Activated T-helper 2 cell treated with anti-CD3 and anti-CD28 coated beads, Interferon-gamma antibody, Interleukin-2, Interleukin-4, amounts not matched to agents 10 μg/mL and 5 μg/mL and 100 μg/mL, durations not matched to agents 14 hours and 24 hours and 36 hours (primary cell): ENCODE measurements at regions of chr10 and their contacts with region 1.

Region 1: DNA sequence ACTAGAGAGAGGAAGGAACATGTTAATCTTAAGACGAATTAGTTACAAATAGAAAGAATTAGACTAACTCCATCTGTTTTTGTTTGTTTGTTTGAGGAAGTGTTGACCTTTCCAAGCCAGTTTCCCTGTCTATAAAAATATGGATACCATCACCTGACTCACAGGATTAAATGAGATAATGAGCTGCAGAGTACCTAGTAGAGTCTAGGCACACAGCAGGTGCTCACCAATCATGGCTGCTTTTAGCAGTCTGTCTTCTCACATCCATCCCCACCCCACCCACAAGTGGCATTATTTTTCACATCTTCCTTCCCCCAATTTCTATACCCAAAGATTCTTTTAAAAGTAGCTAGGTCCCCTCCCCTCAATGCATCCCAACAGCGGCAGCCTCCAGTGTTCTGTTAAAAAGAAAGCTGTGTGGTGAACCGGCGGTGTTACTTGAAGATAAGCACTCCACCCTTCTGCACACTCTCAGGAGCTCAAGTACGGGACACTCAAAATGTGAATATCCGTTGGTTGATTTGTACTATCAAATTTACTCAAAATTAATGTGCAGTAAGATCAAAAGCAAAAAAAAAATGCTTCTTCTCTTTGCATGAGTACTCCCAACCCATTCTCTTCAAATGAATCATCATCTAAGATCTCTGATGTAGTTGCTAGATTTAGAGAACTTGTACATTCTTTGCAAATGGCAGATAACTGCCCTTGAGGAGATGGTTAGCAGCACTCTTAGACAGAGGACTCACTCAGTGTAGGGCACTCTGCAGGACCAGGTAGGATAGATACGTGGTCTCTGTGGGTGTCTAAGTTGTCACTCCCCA is 145.4 kb upstream of the ASAH2 start:
- DNase-seq: peak; percentile 44
- H3K4me3 Mint-ChIP-seq: peak overlapping the region; percentile 68
- H3K27ac Mint-ChIP-seq: peak overlapping the region; percentile 92
- H3K4me1 Mint-ChIP-seq: peaks cover 59% of the 10 kb centered on the region
- H3K27me3 Mint-ChIP-seq: no peaks in the 10 kb centered on the region

Region 2: DNA sequence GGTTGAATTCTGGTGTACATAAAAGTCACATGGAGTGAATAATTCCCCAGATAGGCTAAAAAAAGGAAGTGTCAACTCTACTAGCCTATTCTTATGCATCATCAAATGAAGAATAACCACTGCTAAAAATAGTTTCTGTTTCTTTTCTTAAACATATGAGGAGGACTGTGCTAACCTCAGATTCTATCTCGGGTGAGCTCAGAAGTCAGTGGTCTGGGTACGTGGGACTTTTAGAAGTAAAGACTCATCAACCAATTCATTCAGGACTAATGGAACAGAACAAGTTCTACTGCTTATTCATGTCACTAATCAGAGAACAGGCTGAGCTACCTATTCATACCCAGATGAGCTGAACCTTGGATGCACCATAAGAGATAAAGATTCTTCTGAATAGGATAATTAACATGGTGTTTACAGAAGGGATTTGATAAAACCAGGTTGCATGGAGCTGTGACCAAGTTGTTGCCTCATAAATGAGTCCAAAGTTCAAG is 135.9 kb before region 1 on chr10:
- intact Hi-C with region 1: loop called (anchors 1 kb)
- DNase-seq: peak; percentile 22
- H3K4me3 Mint-ChIP-seq: no peak overlapping the region
- H3K27ac Mint-ChIP-seq: no peak overlapping the region
- H3K4me1 Mint-ChIP-seq: peaks cover 29% of the 10 kb centered on the region
- H3K27me3 Mint-ChIP-seq: peaks cover 60% of the 10 kb centered on the region

Region 3: GRCh38 chr10:50325449-50326171 is 71.1 kb before region 1 on chr10:
- intact Hi-C with region 1: loop called (anchors 5 kb)
- DNase-seq: peak; percentile 23
- H3K4me3 Mint-ChIP-seq: peak overlapping the region; percentile 60
- H3K27ac Mint-ChIP-seq: no peak overlapping the region
- H3K4me1 Mint-ChIP-seq: peaks cover 79% of the 10 kb centered on the region
- H3K27me3 Mint-ChIP-seq: no peaks in the 10 kb centered on the region

Region 4: GRCh38 chr10:50417886-50418830 is 21.5 kb after region 1 on chr10:
- intact Hi-C with region 1: loop called (anchors 1 kb)
- DNase-seq: peak; percentile 68
- H3K4me3 Mint-ChIP-seq: peak overlapping the region; percentile 85
- H3K27ac Mint-ChIP-seq: peak overlapping the region; percentile 77
- H3K4me1 Mint-ChIP-seq: peaks cover 50% of the 10 kb centered on the region
- H3K27me3 Mint-ChIP-seq: no peaks in the 10 kb centered on the region

Region 5: DNA sequence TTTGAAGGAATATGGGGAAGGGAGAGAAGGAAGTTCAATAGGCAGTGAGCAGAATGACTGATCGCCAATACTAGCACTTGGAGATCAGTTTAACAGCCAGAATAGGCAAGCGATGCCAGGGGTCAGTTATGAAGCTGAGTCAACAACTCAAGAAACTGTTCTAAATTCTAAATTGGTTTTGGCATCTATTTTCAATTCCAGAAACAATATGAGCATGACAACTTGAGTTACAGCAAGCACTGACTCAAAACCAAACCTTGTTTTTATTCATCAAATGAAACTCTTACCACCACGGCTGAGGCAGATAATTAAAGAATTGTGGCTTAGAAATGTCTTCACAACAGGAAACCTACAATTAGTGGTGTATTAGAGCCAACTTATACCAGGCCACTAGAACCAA is 35.1 kb after region 1 on chr10:
- intact Hi-C with region 1: loop called (anchors 1 kb)
- DNase-seq: no peak
- H3K4me3 Mint-ChIP-seq: peak overlapping the region; percentile 37
- H3K27ac Mint-ChIP-seq: peak overlapping the region; percentile 76
- H3K4me1 Mint-ChIP-seq: peaks cover 34% of the 10 kb centered on the region
- H3K27me3 Mint-ChIP-seq: peaks cover 8% of the 10 kb centered on the region

Region 6: DNA sequence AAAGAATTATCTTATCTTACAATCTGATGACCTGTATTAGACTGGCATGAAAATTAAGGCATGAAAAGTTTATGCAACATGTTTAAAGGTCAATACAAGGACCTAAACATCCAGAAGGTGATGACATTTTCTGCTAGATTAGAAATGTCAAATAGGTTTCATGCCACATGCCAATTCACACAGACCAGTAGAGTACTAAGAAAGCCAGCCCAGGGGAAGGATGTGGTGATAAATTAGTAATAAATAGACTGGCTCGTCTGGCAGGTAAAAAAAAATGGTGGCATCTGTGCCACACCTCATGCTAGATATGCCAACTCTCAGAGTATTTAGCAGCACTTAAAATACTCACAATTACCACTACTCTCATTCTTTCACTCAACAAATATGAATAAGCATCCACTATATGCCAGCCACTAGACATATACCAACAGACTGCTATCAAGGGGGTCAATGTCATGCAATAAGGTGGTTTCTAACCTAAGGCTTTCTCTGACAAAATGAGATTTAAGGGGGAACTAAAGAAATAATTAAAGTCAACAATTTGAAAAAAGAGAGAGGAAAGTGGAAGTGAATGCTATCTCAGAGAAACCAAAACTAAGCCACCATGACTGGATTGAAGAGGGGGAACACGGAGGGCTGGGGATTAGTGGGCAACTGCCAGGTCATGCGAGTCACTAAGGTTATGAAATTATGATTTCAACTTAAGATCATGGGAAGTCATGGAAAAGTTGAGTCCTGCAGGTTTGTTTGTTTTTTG is 143.5 kb after region 1 on chr10:
- intact Hi-C with region 1: loop called (anchors 1 kb)
- DNase-seq: no peak
- H3K4me3 Mint-ChIP-seq: peak overlapping the region; percentile 9
- H3K27ac Mint-ChIP-seq: peak overlapping the region; percentile 83
- H3K4me1 Mint-ChIP-seq: peaks cover 72% of the 10 kb centered on the region
- H3K27me3 Mint-ChIP-seq: no peaks in the 10 kb centered on the region